Left cardiac atrium (tissue), 4 donors: ENCODE measurements at regions of chr1 and their contacts with region 1.

Region 1: GRCh38 chr1:110338886-110339406 is at the start of gene RBM15:
- DNase-seq: peak; percentile 98
- ATAC-seq: peak; percentile 83 to 88
- total RNA-seq, gene RBM15: 13.7 to 19.6 TPM

Region 2: DNA sequence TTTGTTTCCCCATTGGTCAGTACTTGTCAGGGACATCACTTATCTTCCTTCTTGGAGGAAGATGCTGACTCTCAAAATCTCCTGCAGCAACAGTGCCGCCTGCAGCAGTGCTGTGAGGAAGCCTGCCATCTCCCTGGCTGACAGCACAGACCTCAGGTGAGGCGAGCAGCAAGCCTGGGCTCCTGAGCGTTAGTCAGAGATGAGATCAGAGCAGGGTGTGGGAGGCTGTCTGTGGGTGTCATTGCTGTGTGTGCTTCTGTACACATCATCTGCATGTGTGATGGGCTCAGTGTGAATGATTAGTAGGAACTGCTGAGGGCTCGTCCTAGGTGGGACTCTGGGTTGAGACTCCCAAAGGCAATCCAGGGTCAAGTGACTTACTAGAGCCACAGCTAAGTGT is 298.4 kb before region 1 on chr1:
- intact Hi-C with region 1: no loop called
- DNase-seq: no peak
- ATAC-seq: no peak

Region 3: GRCh38 chr1:110407260-110408210 is 68.6 kb after region 1 on chr1 and contains the start of gene LAMTOR5:
- intact Hi-C with region 1: loop called in 1 of 2 experiments (anchors 2 kb)
- DNase-seq: peak; percentile 94
- ATAC-seq: peak; percentile 96 to 97
- total RNA-seq, gene LAMTOR5: 191 to 197 TPM